GM10248 (cell line): ENCODE measurements at regions of chr17 and their contacts with region 1.

Region 1: GRCh38 chr17:63425482-63425881 is 20.6 kb downstream of the CYB561 start:
- DNase-seq: peak; percentile 78
- CTCF ChIP-seq: peak; percentile 89

Region 2: DNA sequence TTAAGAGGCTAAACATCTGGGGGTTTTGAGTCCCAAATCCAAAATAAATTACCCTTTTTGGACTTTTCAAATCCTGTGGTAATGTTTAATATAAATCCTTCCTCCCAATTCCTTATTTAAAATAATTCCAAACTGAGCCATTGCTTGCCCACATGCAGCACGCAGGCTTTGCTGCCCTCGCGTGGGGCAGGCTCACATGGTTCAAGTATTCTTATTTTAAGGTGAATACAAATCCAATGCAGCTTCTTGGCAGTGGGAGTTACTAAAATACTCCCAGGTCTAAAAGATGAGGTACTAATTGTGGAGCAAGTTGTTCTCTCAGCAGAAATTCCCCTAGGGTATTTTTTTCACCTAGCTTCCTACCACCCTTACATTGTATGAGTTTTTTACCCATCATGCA is 12.4 kb before region 1 on chr17:
- CTCF ChIA-PET with region 1: interaction called, 51 read pairs
- POLR2A ChIA-PET with region 1: no interaction called
- DNase-seq: no peak
- CTCF ChIP-seq: no peak

Region 3: GRCh38 chr17:63445979-63446691 is 20.7 kb after region 1 on chr17 and contains the start of gene CYB561:
- CTCF ChIA-PET with region 1: interaction called, 37 read pairs
- POLR2A ChIA-PET with region 1: no interaction called
- DNase-seq: peak; percentile 90
- CTCF ChIP-seq: peak; percentile 23

Region 4: GRCh38 chr17:63478791-63479494 is 53.5 kb after region 1 on chr17:
- CTCF ChIA-PET with region 1: interaction called, 224 read pairs
- POLR2A ChIA-PET with region 1: no interaction called
- DNase-seq: peak; percentile 92
- CTCF ChIP-seq: peak; percentile 87

Region 5: DNA sequence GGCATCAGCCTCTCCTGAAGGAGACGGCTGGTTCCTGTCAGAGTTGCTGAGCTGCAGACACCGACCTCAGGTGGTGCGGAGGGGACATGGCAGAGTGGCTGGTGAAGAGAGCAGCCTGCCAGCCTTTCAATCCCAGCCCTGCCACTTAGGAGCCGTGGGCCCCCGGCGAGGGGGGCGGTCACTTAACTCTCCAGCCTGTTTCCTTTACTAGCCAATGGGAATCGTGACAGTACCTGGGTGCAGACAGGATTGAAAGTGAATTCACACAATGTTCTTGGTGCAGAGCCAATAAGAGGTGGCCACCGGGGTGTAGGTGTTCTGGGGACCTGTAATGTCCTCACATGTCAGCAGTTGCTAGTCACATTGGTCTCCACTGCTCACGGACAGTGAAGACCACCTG is 64.8 kb after region 1 on chr17:
- CTCF ChIA-PET with region 1: interaction called, 10 read pairs
- POLR2A ChIA-PET with region 1: no interaction called
- DNase-seq: no peak
- CTCF ChIP-seq: no peak

Region 6: DNA sequence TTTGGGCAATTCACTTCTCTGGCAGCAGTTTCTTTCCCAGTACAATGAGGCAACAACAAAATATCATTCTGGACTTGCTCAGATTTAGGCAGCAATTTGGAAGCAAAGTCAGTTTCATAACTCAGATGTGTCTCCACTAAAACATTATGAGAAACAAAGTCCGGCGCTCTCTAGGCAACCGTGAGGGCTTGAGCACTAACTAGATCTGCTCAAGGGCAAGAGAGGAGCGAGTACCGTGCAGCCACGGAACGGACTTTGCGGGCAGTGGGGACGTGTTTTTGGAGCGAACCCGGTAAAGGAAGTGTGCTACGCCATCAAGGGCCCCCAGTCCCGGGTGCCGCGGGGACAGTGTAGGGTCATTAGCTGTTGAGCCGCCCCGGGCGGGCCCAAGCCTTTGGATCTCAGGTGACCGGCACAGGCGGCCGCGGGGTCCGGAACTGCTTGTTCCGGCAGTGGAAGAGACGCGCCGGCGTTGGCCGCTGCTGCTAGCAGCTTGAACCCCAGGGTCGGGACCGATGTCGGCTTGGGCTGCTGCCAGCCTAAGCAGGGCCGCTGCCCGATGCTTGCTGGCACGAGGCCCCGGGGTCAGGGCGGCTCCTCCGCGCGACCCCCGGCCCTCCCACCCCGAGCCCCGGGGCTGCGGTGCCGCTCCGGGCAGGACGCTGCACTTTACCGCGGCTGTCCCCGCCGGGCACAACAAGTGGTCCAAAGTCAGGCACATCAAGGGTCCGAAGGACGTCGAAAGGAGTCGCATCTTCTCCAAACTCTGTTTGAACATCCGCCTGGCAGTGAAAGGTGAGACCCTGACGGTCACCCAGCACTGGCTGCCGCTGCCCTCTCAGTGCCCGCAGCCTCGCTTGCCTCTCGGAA is 175.3 kb after region 1 on chr17 and contains the start of gene TACO1:
- CTCF ChIA-PET with region 1: interaction called, 12 read pairs
- POLR2A ChIA-PET with region 1: no interaction called
- DNase-seq: peak; percentile 88
- CTCF ChIP-seq: no peak

Region 7: GRCh38 chr17:63697341-63698286 is 272.1 kb after region 1 on chr17:
- CTCF ChIA-PET with region 1: interaction called, 12 read pairs
- POLR2A ChIA-PET with region 1: no interaction called
- DNase-seq: peak; percentile 72
- CTCF ChIP-seq: peak; percentile 80